Activated T-helper 1 cell treated with anti-CD3 and anti-CD28 coated beads, Interleukin-12 subunit alpha, Interleukin-12 subunit beta, Interleukin-2, Interleukin-4 antibody, amounts not matched to agents 30 ng/mL and 10 ng/mL and 1 ng/mL, durations not matched to agents 14 hours and 24 hours and 36 hours (primary cell): ENCODE measurements at regions of chr13 and their contacts with region 1.

Region 1: DNA sequence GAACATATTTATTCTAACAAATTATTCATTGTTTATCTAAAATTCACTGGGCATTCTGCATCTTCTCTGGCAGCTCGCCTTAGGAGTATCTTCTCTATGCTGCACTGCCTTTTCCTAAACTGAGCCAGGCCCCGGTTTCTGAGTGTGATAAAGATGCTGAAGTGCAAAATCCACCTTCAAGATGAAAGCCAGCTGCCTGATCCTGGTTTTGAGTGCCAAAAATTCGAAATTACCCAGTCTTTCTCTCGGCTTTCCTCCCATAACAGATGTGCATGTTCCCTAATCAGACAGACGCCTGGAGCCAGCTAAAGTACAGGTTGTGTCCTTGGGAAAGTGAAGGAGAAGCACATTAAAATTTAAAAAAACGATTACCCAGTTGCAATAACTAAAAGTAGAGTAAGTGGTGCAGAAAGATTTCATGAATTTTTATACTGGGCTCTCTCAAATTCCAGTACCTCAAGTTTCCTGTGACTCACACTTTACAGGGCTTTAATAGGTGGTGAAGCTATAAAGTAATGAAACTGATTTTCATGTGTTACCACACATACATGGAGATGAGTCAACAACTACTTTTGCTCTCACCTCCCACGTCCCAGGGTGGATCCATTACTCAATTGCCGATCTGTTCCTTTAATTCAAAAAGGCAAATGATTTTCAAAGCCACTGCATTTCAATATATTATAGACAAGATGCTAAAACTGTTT is 65.0 kb upstream of the GTF2F2 start:
- DNase-seq: peak; percentile 3
- H3K4me3 Mint-ChIP-seq: no peak overlapping the region
- H3K27ac Mint-ChIP-seq: peak overlapping the region; percentile 4
- H3K4me1 Mint-ChIP-seq: peaks cover 20% of the 10 kb centered on the region
- H3K27me3 Mint-ChIP-seq: peaks cover 51% of the 10 kb centered on the region

Region 2: DNA sequence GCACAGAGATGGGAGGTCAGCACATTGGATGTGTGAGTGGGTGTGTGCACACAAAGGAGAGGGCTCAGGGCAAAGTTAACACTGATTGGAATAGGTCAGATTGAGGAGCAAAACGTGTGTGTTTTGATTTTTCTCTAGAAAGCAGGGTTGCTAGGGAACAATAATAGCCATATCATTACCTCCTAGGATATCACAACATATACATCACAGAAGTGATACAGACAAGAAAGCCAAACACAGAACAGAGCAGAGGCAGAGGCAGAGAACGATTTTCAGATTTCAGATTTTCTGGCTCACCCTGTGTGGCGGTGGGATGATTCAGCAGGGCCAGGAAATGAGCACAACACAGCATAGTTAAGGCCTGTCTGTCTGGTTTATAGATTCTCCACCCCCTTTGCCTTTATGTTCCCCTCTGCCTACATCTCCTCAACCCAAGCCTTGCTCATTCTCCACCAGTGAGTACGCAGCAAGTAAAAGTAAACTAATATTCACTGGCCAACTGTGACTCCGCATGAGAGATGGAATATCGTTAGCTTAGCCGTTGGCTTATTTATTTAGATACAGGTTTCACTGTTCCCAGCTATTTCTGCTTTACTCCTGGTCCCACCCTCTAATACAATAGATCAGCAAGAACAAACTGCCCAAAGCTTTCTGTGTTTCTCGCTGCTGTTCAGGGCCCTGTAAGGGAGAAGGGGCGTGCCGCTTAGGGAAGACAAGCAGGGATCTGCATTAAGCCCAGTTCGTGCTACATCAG is 296.5 kb before region 1 on chr13:
- intact Hi-C with region 1: no loop called
- DNase-seq: no peak
- H3K4me3 Mint-ChIP-seq: no peak overlapping the region
- H3K27ac Mint-ChIP-seq: peak overlapping the region; percentile 79
- H3K4me1 Mint-ChIP-seq: peaks cover 32% of the 10 kb centered on the region
- H3K27me3 Mint-ChIP-seq: peaks cover 2% of the 10 kb centered on the region

Region 3: DNA sequence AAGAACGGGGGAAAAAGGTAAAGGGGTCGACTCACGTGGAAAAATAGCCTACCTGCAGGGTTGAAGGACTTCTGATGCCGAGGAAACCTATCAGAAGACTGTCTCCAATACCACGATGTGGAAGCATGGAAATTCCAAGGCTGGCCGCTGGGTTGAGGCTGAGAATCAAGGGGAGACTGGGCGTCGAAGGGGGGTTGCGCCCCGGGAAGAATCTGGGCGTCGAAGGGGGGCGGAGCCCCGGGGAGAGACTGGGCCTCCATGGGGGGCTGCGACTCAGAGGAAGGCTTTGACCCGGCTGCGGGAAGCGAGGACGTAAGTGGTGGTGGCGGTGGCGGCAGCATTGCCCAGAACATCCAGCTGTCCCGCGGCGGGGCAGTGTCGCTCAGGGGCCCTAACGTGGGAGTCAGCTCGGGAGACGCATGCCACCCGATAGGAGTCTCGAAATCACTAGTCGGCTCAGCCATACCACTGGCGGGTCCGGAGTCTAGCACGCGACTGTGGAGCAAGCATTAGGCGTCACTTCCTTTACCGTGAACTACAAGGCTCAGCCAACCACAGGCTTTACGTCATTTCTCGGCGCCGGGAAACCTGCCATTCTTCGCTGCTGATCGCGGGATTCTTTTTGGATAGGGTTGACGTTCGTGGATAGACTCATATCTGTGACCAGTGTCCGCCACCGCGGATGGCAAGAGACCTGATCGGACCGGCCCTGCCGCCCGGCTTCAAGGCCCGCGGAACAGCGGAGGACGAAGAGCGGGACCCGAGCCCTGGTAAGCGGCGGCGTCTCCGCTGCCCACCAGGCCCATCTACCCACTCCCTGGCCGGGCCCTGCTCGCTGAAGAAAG is 66.2 kb before region 1 on chr13 and contains the starts of genes GPALPP1 and NUFIP1:
- intact Hi-C with region 1: loop called (anchors 2 kb)
- DNase-seq: peak; percentile 90
- H3K4me3 Mint-ChIP-seq: peak within 1 kb of the TSS; percentile 91
- H3K27ac Mint-ChIP-seq: peak within 1 kb of the TSS; percentile 91
- H3K4me1 Mint-ChIP-seq: peaks cover 43% of the 10 kb centered on the region
- H3K27me3 Mint-ChIP-seq: no peaks in the 10 kb centered on the region
- total RNA-seq, gene GPALPP1: 29.8 and 33.5 TPM in 2 replicates
- total RNA-seq, gene NUFIP1: 12.2 and 13.5 TPM in 2 replicates

Region 4: GRCh38 chr13:45040622-45041021 is 14.7 kb before region 1 on chr13:
- intact Hi-C with region 1: no loop called
- DNase-seq: no peak
- H3K4me3 Mint-ChIP-seq: no peak overlapping the region
- H3K27ac Mint-ChIP-seq: no peak overlapping the region
- H3K4me1 Mint-ChIP-seq: peaks cover 4% of the 10 kb centered on the region
- H3K27me3 Mint-ChIP-seq: peaks cover 7% of the 10 kb centered on the region

Region 5: GRCh38 chr13:45082964-45083363 is 27.6 kb after region 1 on chr13:
- intact Hi-C with region 1: no loop called
- DNase-seq: no peak
- H3K4me3 Mint-ChIP-seq: no peak overlapping the region
- H3K27ac Mint-ChIP-seq: no peak overlapping the region
- H3K4me1 Mint-ChIP-seq: no peaks in the 10 kb centered on the region
- H3K27me3 Mint-ChIP-seq: peaks cover 15% of the 10 kb centered on the region

Region 6: DNA sequence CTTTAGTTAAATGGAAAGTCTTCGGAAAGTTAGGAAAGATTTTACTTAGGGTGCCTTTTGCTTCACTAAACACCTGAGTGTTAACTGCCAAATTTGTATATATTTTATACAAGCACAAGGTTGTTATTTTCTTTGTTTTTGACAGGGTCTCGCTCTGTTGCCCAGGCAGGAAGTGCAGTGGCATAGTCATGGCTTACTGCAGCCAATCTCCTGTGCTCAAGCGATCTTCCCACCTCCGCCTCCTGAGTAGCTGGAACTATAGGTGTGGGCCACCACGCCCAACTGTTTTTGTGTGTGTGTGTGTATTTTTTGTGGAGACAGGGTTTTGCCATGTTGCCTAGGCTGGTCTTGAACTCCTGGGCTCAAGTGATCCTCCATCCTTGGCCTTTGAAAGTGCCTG is 129.3 kb after region 1 on chr13:
- intact Hi-C with region 1: no loop called
- DNase-seq: no peak
- H3K4me3 Mint-ChIP-seq: no peak overlapping the region
- H3K27ac Mint-ChIP-seq: no peak overlapping the region
- H3K4me1 Mint-ChIP-seq: peaks cover 18% of the 10 kb centered on the region
- H3K27me3 Mint-ChIP-seq: no peaks in the 10 kb centered on the region

Region 7: DNA sequence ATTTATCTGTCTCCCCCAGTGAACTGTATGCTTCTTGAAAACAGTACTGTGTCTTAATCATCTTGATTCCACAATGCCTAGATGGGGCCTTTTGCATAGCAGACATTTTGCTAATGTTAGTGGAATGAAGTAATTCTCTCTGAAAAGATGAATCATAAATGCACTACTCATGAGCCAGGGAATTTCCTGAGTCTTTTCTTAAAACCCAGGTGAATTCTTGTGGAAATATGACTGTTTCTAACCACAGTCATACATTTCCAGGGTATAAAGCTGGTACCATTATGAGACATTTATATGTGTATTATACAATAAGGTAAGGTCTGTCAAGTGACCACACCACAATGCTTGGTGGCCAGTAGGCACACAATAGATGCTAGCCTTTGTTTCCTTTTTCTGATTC is 151.0 kb after region 1 on chr13:
- intact Hi-C with region 1: loop called (anchors 1 kb)
- DNase-seq: no peak
- H3K4me3 Mint-ChIP-seq: no peak overlapping the region
- H3K27ac Mint-ChIP-seq: peak overlapping the region; percentile 23
- H3K4me1 Mint-ChIP-seq: peaks cover 15% of the 10 kb centered on the region
- H3K27me3 Mint-ChIP-seq: no peaks in the 10 kb centered on the region